ENCODE measurements at regions of chr9 and their contacts with region 1.

Region 1: DNA sequence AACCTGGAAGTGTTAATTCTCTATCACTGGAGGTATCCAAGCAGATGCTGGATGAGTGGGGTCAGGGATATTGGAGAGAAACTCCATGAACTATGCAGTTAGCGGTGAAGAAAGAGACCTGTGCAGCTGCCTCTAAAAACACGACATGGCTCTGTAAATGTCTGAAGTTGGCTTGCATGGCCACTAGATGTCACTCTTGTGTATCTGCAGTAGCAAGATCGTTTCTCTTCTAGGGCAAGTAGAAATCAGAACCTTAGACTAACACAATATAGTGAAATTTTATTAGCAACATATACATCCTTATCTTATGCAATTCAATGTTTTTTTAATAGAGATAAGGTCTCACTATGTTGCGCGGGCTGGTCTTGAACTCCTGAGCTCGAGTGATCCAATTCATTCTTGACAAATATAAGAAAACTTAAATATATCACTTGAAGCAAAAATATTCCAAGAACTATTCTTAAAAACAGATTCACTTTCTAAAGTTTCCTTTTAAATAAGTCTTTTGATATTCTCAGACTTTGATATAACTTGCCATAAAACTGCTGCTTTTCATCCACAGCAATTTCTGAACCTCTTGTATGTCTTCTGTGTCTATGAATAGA is 2.9 kb downstream of the OR2S2 start:
- DNase-seq: peak in 1 of 2 donors; percentile 60
- ATAC-seq: peak; percentile 81

Region 2: DNA sequence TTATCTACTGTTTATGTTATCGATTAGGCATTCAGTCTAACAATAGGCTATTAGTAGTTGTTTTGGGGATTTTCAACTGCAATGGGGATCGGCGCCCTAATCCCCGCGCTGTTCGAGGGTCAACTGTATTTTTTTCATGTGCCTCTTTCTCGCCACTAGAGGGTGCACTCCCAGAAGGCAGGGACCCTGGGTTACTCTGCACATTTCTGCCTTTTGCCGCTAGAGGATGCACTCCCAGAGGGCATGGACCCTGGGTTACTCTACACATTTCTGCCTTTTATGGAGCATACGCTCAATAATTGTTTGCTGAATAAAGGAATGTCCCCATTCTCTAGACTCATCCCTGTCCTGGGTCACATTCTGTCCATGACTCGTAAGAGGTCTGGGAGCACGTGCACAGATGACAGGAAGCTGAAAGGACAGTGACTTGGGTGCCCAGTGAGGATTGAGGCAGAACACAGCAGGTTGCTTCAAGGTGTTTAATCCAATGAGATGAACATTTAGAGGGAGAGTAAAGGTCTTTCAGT is 53.8 kb after region 1 on chr9:
- intact Hi-C with region 1: loop called in 1 of 2 experiments (anchors 5 kb)
- DNase-seq: peak; percentile 53 to 72
- ATAC-seq: peak; percentile 50

Region 3: DNA sequence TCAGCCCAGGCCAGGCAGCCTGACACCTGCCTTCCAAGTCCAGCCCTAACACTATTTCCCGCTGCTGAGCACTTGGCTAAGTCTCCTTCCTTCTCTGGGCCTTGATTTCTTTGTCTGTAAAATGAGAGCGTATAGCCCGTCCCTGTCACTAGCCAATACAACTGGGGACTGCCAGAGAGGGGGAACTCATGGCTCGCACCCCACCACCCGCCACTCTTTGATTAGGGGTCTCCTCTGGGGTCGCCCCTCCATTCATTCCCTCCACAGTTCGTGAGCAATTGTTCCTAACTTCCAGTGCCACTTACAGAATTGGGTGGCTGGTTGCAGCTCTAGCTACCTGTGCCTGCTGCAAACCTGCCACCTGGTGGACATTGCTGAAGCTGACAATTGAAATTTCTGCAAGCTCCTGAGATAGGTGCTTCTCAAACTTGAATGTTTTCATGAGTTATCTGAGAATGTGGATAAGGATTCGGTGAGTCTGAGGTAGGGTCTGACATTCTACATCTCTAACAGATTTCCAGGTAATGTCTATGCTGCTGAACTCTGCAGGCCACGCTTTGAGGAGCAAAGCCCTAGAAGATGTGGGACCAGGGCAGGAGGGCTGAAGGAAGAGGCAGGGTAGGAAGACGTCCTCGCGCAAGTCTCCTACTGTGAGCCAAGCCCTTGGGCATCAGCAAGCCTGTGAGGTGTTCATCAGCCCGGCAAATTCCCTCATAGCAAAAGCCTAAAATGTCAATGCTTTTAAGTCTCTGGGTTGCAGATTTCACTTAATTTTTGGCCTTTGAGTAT is 68.4 kb after region 1 on chr9:
- intact Hi-C with region 1: loop called in 1 of 2 experiments (anchors 5 kb)
- DNase-seq: peak; percentile 59 to 78
- ATAC-seq: peak; percentile 91

Region 4: GRCh38 chr9:36337865-36338264 is 382.8 kb after region 1 on chr9:
- intact Hi-C with region 1: loop called in 1 of 2 experiments (anchors 10 kb)
- DNase-seq: no peak
- ATAC-seq: peak; percentile 57

Region 5: DNA sequence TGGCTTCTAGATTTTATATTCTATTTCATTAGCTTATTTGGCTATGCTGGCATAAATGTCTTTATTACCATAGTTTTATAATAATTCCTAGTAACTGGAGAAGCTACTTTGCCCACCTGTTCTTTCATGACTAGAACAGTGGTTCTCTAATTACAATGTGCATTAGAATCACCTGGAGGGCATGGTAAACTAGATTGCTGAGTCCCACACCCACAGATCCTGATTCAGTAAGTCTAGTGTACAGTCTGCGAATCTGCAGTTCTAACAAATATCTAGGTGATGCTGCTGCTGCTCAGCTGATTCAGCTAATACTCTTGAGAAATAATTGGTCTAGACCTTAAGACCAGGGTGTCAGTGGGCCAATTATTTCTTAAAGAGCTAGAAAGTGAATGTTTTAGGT is 409.5 kb after region 1 on chr9:
- intact Hi-C with region 1: no loop called
- DNase-seq: no peak
- ATAC-seq: no peak